ENCODE measurements at regions of chr6 and their contacts with region 1.

Region 1: GRCh38 chr6:56292505-56293181 is 45.3 kb upstream of the COL21A1 start:
- ATAC-seq: peak; percentile 77 to 100 (median 82)
- H3K4me3 ChIP-seq: no peak overlapping the region
- H3K27ac ChIP-seq: no peak overlapping the region
- H3K4me1 ChIP-seq: peaks cover 0 to 3% of the 10 kb centered on the region in 2 donors

Region 2: DNA sequence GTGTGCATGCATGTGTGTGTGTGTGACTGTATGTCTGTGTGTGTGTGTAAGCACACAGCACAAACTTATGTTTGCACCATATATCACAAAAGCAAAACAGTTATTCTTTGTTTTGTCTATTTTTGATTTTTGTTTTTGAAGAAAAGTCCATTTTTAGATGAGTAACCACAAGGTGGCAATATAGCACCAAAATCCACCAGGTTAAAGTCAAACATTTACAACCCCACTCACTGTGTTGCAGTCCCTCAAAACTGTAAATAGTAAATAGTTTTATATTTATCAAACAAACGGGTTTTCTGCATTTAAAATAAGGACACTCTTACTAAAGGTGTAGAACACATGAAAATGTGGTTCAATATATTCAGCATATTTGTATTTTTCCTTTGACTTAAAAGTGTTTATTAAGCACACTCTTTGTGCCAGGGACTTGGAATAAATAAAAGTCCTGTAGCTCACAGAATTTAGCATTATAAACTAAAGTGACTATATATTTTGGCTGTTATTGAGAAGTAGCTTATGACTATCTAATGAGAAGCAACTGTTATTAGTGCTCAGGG is 846.9 kb before region 1 on chr6:
- in situ Hi-C with region 1: loop called in 2 of 9 experiments (anchors 25 kb)
- ATAC-seq: peak in 1 of 8 experiments; percentile 37
- H3K4me3 ChIP-seq: no peak overlapping the region
- H3K27ac ChIP-seq: no peak overlapping the region
- H3K4me1 ChIP-seq: no peaks in the 10 kb centered on the region

Region 3: DNA sequence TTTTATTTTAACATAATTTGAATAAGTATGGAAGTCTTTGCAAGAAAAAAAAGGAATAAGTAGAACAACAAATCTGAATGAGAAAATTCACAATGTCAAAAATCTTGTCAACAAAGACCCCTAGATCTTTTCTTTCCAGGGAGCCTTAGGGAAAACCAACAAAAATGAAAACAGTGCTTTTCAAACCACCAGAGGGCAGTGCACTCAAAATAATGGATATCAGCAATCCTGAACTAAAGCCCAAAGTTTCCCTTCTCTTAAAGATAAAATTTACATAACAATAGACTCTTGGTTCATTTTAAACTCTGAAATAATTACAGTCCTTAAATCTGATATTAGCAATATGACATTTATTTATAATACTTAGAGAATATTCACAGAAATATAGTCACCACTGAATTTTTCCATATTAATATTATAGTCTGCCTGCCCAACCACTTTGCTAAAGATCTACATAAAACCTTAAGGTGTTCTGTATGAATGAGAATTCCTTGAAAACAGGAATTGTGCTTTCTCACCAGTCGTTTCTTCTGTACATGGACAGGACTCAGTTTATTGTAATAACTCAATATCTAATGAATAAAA is 311.9 kb before region 1 on chr6:
- in situ Hi-C with region 1: loop called in 8 of 9 experiments (anchors 5 to 25 kb)
- ATAC-seq: peak in 3 of 8 experiments; percentile 24 to 71 (median 30)
- H3K4me3 ChIP-seq: no peak overlapping the region
- H3K27ac ChIP-seq: no peak overlapping the region
- H3K4me1 ChIP-seq: no peaks in the 10 kb centered on the region